ENCODE measurements at regions of chr17 and their contacts with region 1.

Region 1: GRCh38 chr17:29148790-29149430 is 31.3 kb downstream of the MYO18A start:
- DNase-seq: peak; percentile 92 to 95
- ATAC-seq: peak; percentile 87 to 95
- H3K4me3 ChIP-seq: peak overlapping the region; percentile 44
- H3K27ac ChIP-seq: peak overlapping the region; percentile 82 to 94
- H3K4me1 ChIP-seq: peaks cover 63% of the 10 kb centered on the region
- CTCF ChIP-seq: peak; percentile 98
- EP300 ChIP-seq: no peak
- POLR2A ChIP-seq: peak; percentile 84
- RAD21 ChIP-seq: peak; percentile 96 to 100

Region 2: GRCh38 chr17:29054835-29055234 is 94.1 kb before region 1 on chr17:
- CTCF ChIA-PET with region 1: no interaction called
- POLR2A ChIA-PET with region 1: no interaction called
- DNase-seq: no peak
- ATAC-seq: peak in 1 of 2 experiments; percentile 7; a peak in 1 of 6 replicates
- H3K4me3 ChIP-seq: no peak overlapping the region
- H3K27ac ChIP-seq: no peak overlapping the region
- H3K4me1 ChIP-seq: peaks cover 7% of the 10 kb centered on the region
- CTCF ChIP-seq: no peak
- EP300 ChIP-seq: no peak
- POLR2A ChIP-seq: no peak
- RAD21 ChIP-seq: no peak

Region 3: DNA sequence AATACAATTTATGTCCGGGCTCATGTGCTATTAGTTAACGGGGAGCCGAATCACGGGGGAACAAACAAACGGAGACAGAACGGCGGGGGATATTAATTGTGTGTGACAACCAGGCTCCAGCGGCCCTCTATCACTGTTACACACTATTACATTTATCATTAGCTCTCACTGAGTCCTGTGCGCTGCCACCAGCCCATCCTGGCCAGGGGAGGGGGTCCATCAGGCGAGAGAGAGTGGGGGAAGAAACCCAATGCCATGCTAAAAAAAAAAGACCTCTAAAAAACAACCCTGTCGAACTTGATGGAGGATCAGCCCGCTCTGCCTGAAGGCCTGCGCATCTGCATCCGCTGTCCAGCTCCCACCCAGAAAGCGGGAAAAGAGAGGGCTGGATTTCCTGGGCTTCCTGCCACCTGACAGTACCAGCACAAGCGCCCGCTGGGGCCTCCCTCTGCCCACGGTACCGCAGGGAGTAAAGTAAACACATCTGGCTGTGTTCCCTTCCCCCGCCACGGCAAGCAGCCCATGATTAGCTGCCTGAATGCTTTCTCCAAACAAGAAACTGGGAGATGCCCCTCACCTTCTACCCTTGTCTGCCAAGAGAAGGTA is 64.3 kb before region 1 on chr17:
- CTCF ChIA-PET with region 1: no interaction called
- POLR2A ChIA-PET with region 1: no interaction called
- DNase-seq: no peak
- ATAC-seq: no peak
- H3K4me3 ChIP-seq: no peak overlapping the region
- H3K27ac ChIP-seq: no peak overlapping the region
- H3K4me1 ChIP-seq: no peaks in the 10 kb centered on the region
- CTCF ChIP-seq: no peak
- EP300 ChIP-seq: no peak
- POLR2A ChIP-seq: no peak
- RAD21 ChIP-seq: no peak

Region 4: DNA sequence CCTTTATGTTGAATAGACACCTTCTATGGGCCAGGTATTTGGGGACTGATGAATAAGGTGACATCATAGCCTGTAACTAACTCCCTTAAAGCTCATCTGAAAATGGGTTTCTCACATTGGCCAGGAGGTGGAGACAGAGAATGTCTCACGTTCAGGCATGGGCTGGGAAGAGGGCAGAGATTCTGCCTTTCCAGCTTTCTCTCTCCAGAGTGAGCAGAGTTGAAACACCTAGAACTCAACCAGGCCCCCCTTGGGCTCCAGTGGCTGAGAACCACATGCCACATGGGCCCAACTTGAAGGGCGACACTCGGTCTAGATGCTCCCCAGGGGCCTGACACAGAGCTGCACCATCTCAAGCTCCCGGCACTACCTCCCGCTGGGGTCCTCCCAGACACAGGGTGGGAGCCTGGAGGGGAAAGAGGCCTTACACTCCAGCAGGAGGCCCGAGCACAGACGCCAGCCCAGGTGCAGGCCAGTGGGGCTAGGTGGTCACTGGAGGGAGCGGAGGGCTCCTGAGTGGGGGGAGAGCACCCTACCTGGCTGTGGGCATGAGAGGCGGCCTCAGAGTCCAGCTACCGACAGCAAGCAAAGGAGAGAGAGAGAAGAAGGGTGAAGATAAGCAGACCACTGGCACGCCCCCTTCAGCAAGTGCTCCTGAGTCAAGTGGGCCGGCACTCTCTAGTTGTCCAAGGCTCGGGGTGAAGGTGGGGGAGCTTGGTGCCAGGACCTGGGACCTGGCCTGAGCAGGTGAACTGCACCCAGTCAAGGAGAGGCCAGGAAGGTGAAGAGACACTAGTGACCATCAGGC is 24.6 kb before region 1 on chr17:
- CTCF ChIA-PET with region 1: no interaction called
- POLR2A ChIA-PET with region 1: interaction called, 10 read pairs
- DNase-seq: peak; percentile 82 to 83
- ATAC-seq: peak; percentile 83 to 93
- H3K4me3 ChIP-seq: no peak overlapping the region
- H3K27ac ChIP-seq: peak overlapping the region in 1 of 2 experiments; percentile 39; a peak in 3 of 6 replicates
- H3K4me1 ChIP-seq: peaks cover 16% of the 10 kb centered on the region
- CTCF ChIP-seq: peak; percentile 88
- EP300 ChIP-seq: no peak
- POLR2A ChIP-seq: no peak
- RAD21 ChIP-seq: peak; percentile 88 to 96

Region 5: GRCh38 chr17:29190039-29190438 is 41.1 kb after region 1 on chr17:
- CTCF ChIA-PET with region 1: no interaction called
- POLR2A ChIA-PET with region 1: no interaction called
- DNase-seq: no peak
- ATAC-seq: peak; percentile 19 to 27; a peak in 2 of 6 replicates
- H3K4me3 ChIP-seq: no peak overlapping the region
- H3K27ac ChIP-seq: no peak overlapping the region
- H3K4me1 ChIP-seq: no peaks in the 10 kb centered on the region
- CTCF ChIP-seq: no peak
- EP300 ChIP-seq: no peak
- POLR2A ChIP-seq: no peak
- RAD21 ChIP-seq: no peak

Region 6: DNA sequence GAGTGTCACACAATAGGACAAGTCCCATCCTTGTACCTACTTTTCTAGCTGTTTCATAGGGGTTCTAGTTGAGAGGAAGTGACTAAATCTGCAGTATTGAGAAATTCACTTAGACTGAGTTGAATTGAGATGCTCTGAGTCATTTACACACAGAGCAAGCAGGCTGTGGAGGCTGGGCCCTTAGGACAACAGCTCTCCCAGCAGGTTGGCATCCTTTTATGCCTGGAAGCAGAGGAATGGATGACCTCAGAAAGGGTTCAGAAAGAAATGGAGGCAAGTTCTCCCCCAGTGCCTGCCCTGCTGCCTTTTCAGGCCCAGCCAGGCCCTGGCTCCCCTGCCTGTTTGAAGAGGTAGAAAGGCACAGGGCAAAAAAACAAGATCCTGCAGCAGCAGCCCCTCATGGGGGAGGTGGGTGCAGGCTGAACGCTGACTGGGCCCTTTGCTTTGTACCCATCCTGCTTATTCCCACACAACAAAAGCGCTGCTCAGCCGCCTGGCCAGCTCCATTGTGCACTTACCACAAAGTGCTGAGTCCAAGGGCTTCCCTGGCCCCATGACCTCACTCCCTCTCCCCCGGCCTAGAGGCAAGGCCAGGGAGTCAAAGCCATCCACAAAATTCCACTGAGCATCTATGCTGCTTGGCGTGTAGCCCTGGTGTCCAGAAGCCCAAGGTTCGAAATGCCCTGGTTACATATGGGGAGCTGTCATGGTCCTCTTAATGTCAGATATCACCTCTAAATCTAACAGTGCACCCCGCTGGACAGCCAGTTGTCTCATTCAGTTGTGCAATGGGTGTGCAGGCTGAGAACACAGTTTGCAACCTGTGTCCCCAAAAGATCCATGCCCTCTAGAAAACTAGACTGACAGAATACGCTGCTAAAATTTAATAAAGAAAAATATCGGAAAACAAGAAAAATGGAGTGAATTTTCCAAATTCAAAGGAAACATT is 92.4 kb after region 1 on chr17:
- CTCF ChIA-PET with region 1: interaction called, 48 read pairs
- POLR2A ChIA-PET with region 1: interaction called, 12 read pairs
- DNase-seq: peak; percentile 96 to 97
- ATAC-seq: peak; percentile 95 to 98
- H3K4me3 ChIP-seq: no peak overlapping the region
- H3K27ac ChIP-seq: peak overlapping the region; percentile 93
- H3K4me1 ChIP-seq: peaks cover 49% of the 10 kb centered on the region
- CTCF ChIP-seq: no peak
- EP300 ChIP-seq: peak in 1 of 2 experiments; percentile 71; a peak in 1 of 5 replicates
- POLR2A ChIP-seq: no peak
- RAD21 ChIP-seq: peak; percentile 27 to 45; a peak in 2 of 5 replicates

Region 7: DNA sequence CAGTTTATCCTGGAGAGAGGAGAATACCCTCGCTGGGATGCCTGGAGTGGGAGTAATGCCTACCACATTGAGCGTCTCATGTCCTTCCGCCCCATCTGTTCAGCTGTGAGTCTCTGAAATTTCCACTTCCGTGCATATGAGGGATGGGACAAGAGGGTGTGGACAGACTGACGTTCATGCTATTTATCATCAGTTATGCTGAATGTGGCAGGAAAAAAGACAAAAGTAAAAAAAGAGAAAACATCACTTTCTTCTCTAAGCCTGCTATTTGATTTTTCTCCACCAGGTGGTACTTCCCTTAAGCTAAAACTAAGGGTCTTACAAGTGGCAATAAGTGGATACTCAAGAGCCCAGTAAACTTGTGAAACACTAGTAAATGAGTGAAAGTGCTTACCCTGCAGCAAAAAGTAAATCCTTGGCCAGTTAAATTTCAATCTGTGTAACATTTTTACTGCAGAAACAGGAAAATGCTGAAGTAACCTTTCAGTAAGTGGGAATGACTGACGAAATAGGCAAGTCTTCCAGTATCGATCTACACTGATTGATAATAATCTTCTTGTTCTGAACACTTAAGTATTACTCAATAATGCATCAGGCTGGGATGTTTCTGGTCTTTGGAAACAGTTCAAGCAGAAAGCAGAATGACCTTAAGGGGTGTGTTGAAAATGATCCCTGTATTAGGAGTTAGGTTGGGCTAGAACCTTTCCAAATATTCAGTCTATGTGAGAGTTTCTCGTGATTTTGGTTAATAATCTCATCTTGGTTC is 103.4 kb after region 1 on chr17:
- CTCF ChIA-PET with region 1: interaction called, 36 read pairs
- POLR2A ChIA-PET with region 1: no interaction called
- DNase-seq: peak; percentile 59 to 63
- ATAC-seq: peak; percentile 58 to 60; a peak in 5 of 6 replicates
- H3K4me3 ChIP-seq: no peak overlapping the region
- H3K27ac ChIP-seq: no peak overlapping the region; a peak in 1 of 6 replicates
- H3K4me1 ChIP-seq: peaks cover 34% of the 10 kb centered on the region
- CTCF ChIP-seq: peak; percentile 49
- EP300 ChIP-seq: no peak
- POLR2A ChIP-seq: no peak
- RAD21 ChIP-seq: peak; percentile 15 to 46; a peak in 2 of 5 replicates

Region 8: GRCh38 chr17:29283271-29283895 is 134.5 kb after region 1 on chr17:
- CTCF ChIA-PET with region 1: interaction called, 16 read pairs
- POLR2A ChIA-PET with region 1: interaction called, 3 read pairs
- DNase-seq: no peak
- ATAC-seq: peak; percentile 47 to 49; a peak in 3 of 6 replicates
- H3K4me3 ChIP-seq: no peak overlapping the region
- H3K27ac ChIP-seq: no peak overlapping the region
- H3K4me1 ChIP-seq: peaks cover 11% of the 10 kb centered on the region; the same call in 2 of the 3 replicates
- CTCF ChIP-seq: peak; percentile 17; the same call in 1 of the 3 replicates
- EP300 ChIP-seq: no peak
- POLR2A ChIP-seq: no peak
- RAD21 ChIP-seq: no peak